ENCODE measurements at regions of chr2 and their contacts with region 1.

Region 1: DNA sequence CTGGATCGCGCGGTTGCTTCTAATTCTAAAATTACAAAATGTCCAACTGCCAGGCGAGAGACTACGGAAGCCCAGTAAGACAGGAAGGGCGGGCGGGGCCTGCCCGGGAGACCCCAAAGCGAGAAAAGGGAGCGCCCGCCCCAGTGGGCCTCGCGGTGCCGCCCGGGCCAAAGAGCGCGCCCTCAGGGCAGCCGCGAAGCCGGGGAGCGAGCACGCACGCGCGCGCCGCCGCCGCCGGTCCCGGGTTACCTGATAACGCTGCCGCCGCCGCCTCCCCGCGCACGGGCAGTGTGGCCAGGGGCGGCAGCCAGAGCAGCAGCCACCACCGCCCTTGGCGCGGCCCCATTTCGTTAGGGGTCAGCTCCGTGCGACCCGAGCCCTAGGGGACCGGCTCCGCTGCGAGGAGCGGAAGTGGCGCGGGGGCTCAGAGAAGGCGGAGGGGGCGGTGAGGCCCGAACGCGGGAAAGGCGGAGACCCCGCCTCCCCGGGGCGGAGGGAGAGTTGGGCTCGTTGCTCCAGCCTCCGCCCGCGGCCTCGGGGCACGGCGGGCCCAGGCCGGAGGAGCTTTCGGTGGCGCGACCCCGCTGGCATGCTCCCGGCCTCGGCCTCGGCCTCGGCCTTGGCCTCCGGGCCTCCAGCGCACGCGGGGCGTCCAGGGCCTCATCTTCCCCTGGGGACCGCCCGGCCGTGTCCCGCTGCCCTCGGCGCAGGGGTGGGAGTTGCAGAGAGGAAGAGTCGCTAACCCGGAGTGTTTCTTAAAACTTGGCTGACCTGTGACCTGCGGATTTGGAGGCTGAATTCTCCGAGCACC is at the start of gene NEMP2:
- DNase-seq: peak; percentile 92
- total RNA-seq, gene NEMP2: 3.6 TPM

Region 2: GRCh38 chr2:190583507-190584337 is 49.2 kb after region 1 on chr2:
- intact Hi-C with region 1: loop called (anchors 5 kb)
- DNase-seq: no peak

Region 3: DNA sequence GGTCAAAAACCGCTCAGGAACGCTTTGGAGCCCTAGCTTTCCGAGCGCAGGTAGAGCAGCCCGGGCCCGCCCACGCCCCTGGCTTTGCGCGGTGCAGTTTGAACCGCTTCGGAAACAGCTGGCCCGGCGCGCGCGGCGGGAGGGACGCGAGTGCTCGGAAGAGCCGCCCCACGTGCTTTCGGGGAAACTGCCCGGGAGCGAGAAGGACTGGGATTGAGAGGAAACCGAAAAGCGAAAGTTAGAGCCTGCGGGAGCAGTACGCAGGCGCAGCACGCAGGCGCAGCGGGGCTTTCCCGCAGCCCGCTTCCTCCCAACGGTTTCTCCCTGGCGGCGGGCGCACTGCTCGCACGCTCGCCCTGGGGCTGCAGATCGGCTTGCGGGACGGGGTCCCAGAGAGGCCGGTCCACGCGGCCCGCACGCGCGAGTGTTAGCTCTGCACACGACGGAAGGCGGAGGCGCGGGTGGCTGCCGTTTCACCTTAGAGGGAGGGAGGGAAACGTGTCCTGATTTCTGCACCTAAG is 485.8 kb after region 1 on chr2:
- intact Hi-C with region 1: loop called (anchors 10 kb)
- DNase-seq: peak; percentile 96